ENCODE measurements at regions of chr6 and their contacts with region 1.

Region 1: DNA sequence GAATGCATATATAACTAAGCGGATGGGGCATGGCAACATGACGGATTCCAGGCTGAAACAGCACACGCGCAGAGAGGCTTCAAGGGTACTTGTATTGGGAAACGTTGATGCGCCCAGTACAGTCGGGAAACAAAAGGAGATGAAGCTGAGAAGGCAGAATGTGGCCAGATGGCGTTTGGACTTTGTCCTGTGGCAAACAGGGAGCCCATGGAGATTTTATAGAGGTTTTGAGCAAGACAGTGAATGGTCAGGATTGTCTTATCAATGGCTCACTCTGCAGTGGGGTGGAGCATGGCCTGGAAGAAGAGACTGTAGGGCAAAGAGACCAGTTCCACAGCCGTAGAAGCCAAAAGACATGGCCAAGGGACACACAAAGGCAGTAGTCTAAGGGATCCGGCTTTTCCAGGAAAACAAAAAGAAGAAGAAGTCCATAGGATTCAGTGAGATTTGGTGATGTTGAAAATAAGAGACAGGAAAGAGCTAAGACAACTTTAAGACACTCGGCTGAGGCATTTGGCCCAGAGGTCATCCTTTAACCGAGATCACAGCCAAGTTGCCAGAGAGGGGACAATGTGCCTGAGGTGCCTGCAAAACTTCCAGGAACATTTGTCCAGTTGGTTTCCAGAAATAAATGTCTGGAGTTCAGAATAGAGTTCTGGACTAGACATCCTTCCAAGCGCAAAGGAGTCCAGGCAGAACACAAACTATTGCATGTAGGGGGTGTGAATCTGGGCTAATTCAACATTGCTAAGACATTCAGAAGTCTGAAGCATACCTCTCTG is 123.0 kb upstream of the RREB1 start:
- DNase-seq: no peak
- H3K4me3 Mint-ChIP-seq: no peak overlapping the region
- H3K27ac Mint-ChIP-seq: no peak overlapping the region
- H3K4me1 Mint-ChIP-seq: no peaks in the 10 kb centered on the region
- H3K27me3 Mint-ChIP-seq: peaks cover 9% of the 10 kb centered on the region

Region 2: DNA sequence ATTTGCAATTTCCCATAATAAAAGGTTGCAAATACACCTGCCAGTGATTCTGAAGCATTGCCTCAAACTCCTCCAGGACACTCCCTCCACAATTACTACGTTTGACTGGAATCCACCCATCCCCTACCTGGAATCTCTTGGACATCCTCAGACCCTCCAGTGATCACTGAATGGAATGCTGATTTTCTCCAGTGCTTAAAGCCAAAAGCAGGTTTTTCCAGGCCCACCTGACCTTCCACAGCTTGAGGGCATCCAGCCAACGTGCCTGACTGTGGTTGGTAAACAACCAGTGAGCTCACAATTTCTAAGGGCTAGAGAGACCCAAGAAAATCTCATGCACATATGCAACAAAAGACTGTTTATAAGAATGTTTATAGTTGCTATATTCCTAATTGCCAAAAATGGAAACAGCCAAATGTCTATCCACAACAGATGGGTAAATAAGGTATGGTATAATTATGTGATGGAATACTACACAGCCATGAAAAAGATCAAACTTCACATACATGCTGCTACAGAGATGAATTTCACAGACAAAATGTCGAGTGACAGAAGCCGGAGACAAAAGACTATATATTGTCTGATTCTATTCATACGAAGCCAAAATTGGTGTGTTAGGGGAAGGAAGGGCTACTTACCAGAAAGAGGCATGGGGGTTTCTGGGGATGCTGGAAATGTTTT is 24.1 kb before region 1 on chr6:
- CTCF ChIA-PET with region 1: no interaction called
- POLR2A ChIA-PET with region 1: no interaction called
- intact Hi-C with region 1: loop called (anchors 1 kb)
- DNase-seq: no peak
- H3K4me3 Mint-ChIP-seq: no peak overlapping the region
- H3K27ac Mint-ChIP-seq: no peak overlapping the region
- H3K4me1 Mint-ChIP-seq: no peaks in the 10 kb centered on the region
- H3K27me3 Mint-ChIP-seq: peaks cover 4% of the 10 kb centered on the region

Measured in activated CD4-positive, alpha-beta memory T cell treated with anti-CD3 and anti-CD28 coated beads for 36 hours (primary cell).